GM10248 (cell line): ENCODE measurements at regions of chr7 and their contacts with region 1.

Region 1: DNA sequence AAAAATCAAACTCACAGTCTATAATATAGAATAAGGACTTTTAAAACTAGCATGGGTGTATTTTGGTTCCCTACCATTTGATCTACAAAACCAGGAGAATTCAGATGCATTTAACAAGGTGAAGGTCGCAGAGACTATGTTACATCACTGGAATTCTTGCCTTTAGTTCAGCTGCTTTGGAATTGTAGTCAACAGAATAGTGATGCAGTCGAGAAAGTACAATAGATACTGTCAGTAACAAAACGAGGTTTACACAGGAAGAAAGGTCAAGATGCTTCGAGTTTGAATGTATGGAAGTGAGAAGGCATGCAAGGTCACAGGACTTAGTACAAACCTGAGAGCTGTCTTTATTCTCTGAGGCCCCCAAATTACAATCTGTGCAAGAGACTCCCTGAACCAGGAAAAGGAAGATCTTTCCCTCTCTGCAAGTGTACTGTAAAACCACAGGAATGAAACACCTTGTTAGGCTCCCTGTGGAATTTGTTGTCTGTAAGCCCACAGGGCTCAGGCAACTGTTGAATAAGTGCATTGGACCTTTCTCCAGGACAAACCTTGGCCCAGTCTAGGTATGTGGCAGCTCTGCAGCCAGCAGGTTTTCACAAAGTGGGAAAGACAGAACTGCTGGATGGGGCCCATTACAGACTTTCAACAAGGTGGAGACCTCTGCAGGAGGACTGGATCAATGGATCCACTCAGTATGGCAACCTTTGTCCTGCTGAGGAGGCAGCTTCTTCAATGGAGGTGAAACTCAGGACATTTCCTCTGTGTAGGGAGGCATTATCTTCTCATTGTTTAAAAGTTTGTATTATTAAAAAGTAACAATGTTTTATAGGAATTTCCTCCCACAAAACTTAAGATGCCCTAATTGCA is 101.1 kb upstream of the GSDME start:
- DNase-seq: no peak
- CTCF ChIP-seq: no peak

Region 2: DNA sequence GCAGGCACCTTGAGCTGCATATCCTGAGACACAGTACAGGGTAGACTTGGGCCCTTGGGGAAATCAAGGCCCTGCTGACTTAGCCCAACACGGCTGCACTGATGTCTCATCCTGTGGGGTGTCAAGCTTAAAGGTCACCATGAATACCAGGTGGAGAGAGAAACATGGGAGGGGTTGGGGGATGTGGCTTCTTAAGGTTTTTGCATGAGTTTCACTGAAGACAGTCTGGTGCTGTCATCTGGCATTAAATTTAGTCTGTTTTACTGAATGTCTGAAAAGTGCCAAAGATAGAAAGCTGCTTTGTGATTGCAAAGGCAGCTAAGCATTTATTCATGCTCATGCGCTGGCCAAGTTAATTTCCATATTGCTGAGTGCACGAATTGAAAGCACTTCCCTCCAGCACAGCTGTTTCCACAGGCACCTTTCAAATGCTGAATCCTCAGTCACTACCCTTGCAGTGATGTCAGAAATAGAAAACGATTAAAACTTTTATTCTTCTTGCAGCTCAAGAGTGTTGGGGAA is 19.5 kb after region 1 on chr7:
- CTCF ChIA-PET with region 1: interaction called, 21 read pairs
- POLR2A ChIA-PET with region 1: no interaction called
- DNase-seq: peak; percentile 36
- CTCF ChIP-seq: no peak